ENCODE measurements at regions of chr1 and their contacts with region 1.

Region 1: GRCh38 chr1:167687919-167688519 is 33.8 kb upstream of the MPZL1 start:
- DNase-seq: peak in 7 of 10 donors; percentile 45 to 90 (median 68)
- H3K4me3 ChIP-seq: no peak overlapping the region
- H3K27ac ChIP-seq: peak overlapping the region in 20 of 59 donors; percentile 3 to 69 (median 42)
- H3K27me3 ChIP-seq: no peaks in the 10 kb centered on the region
- CTCF ChIP-seq: peak; percentile 86 to 97 (median 92)

Region 2: GRCh38 chr1:167066333-167067122 is 621.5 kb before region 1 on chr1:
- intact Hi-C with region 1: loop called in 1 of 2 experiments (anchors 10 kb)
- DNase-seq: peak; percentile 60 to 89 (median 78)
- H3K4me3 ChIP-seq: peak overlapping the region in 54 of 59 donors; percentile 7 to 66 (median 42)
- H3K27ac ChIP-seq: peak overlapping the region in 6 of 59 donors; percentile 0 to 67 (median 42)
- H3K27me3 ChIP-seq: no peaks in the 10 kb centered on the region
- CTCF ChIP-seq: peak; percentile 68 to 100 (median 97)

Region 3: GRCh38 chr1:167542109-167543032 is 145.6 kb before region 1 on chr1:
- intact Hi-C with region 1: loop called in 1 of 2 experiments (anchors 5 kb)
- DNase-seq: no peak
- H3K4me3 ChIP-seq: no peak overlapping the region
- H3K27ac ChIP-seq: peak overlapping the region in 39 of 59 donors; percentile 2 to 82 (median 35)
- H3K27me3 ChIP-seq: no peaks in the 10 kb centered on the region
- CTCF ChIP-seq: no peak

Region 4: GRCh38 chr1:167553136-167554027 is 134.6 kb before region 1 on chr1 and contains the start of gene CREG1:
- intact Hi-C with region 1: loop called (anchors 5 kb)
- DNase-seq: peak; percentile 88 to 96 (median 93)
- H3K4me3 ChIP-seq: peak within 1 kb of the TSS; percentile 61 to 93 (median 85)
- H3K27ac ChIP-seq: peak within 1 kb of the TSS; percentile 2 to 93 (median 80)
- H3K27me3 ChIP-seq: no peaks in the 10 kb centered on the region
- CTCF ChIP-seq: peak in 34 of 56 donors; percentile 4 to 64 (median 29)
- total RNA-seq, gene CREG1: 21.6 to 57.2 (median 42.1) TPM

Region 5: GRCh38 chr1:167599957-167600581 is 88.0 kb before region 1 on chr1:
- intact Hi-C with region 1: loop called (anchors 5 kb)
- DNase-seq: peak in 1 of 10 donors; percentile 39
- H3K4me3 ChIP-seq: no peak overlapping the region
- H3K27ac ChIP-seq: peak overlapping the region in 4 of 59 donors; percentile 46 to 71 (median 62)
- H3K27me3 ChIP-seq: no peaks in the 10 kb centered on the region
- CTCF ChIP-seq: peak in 52 of 56 donors; percentile 18 to 71 (median 47)

Region 6: DNA sequence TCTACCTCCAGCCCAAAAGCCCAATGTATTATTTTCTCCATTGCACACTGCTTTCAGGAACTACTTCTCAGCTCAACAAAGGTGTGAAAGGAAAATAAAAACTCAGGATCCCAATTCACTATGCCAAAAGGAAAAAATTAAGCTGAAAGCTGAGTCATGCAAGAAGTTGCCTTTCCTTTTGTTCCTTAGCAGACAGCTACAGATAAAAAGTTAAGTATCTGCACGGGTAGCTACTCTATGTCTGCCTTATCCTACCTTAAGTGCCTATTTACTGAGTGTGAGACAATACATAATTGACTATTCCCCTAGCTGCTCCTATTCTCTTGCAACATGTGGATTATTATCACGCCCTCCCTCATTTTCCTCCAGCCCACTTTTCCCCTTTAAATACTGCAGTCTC is 141.8 kb after region 1 on chr1:
- intact Hi-C with region 1: no loop called
- DNase-seq: no peak
- H3K4me3 ChIP-seq: no peak overlapping the region
- H3K27ac ChIP-seq: no peak overlapping the region
- H3K27me3 ChIP-seq: no peaks in the 10 kb centered on the region
- CTCF ChIP-seq: no peak